ENCODE measurements at regions of chr6 and their contacts with region 1.

Region 1: GRCh38 chr6:7389451-7390225 is at the starts of genes CAGE1 and RIOK1:
- DNase-seq: peak; percentile 95
- H3K4me3 ChIP-seq: peak within 1 kb of the TSS; percentile 55 to 92 (median 77)
- H3K27ac ChIP-seq: peak within 1 kb of the TSS; percentile 66
- H3K4me1 ChIP-seq: peaks cover 13% of the 10 kb centered on the region
- H3K27me3 ChIP-seq: no peaks in the 10 kb centered on the region
- CTCF ChIP-seq: peak in 1 of 2 donors; percentile 14
- POLR2A ChIP-seq: peak; percentile 98
- total RNA-seq, gene CAGE1: not detected in 2 replicates
- total RNA-seq, gene RIOK1: 19.7 and 21.4 TPM in 2 replicates

Region 2: DNA sequence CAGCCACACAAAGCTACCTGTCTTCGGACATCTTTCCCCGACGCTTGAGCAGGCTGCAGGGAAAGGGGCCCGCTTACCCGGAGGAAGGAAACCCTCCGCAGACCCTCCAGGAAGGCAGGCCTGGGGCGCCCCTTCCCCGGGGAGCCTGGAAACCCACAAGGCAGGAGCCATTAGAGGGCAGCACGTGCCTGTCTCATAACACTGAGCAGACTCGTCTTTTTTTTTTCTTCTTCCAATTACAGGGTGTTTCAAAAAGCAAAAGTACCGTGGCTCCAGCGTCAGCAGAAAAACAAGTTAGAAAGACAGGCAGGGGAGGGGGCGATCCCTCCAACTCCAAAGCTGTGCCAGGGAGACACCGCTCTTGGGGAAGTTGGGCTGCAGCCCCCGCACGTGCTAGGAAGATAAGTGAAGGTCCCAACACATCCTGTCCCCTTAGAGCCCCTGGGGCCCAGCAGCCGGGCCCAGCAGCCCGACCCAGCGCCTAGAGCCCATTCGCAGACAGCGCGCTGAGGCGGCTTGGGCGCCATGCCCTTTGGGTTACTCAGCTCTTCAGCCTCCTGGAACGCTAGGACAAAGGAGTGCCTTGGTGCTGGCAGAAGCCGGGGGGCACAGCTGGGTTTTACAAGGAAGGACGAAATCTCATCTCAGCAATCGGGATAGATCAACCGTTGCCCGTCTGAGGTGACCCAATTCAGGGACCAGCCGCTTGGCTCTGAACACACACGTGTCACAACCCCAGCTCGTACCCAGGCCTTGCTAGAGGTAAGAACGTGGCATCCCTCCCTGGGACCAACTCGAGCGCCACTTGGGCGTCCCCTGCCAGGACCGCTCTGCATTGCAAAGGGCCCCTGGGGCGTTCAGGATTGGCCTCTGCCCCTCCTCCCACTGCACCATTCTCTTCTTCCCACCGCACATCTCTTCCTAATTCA is 664.8 kb before region 1 on chr6:
- CTCF ChIA-PET with region 1: no interaction called
- POLR2A ChIA-PET with region 1: no interaction called
- dilution Hi-C with region 1: no loop called
- intact Hi-C with region 1: loop called (anchors 1 kb)
- DNase-seq: peak; percentile 83
- H3K4me3 ChIP-seq: peak overlapping the region in 1 of 3 experiments; percentile 16
- H3K27ac ChIP-seq: peak overlapping the region; percentile 59
- H3K4me1 ChIP-seq: peaks cover 19% of the 10 kb centered on the region
- H3K27me3 ChIP-seq: peaks cover 0 to 2% of the 10 kb centered on the region in 2 experiments
- CTCF ChIP-seq: peak; percentile 57 to 60
- POLR2A ChIP-seq: no peak

Region 3: GRCh38 chr6:7276199-7276524 is 113.5 kb before region 1 on chr6:
- CTCF ChIA-PET with region 1: interaction called, 11 read pairs
- POLR2A ChIA-PET with region 1: no interaction called
- dilution Hi-C with region 1: no loop called
- intact Hi-C with region 1: loop called (anchors 2 kb)
- DNase-seq: no peak
- H3K4me3 ChIP-seq: no peak overlapping the region
- H3K27ac ChIP-seq: no peak overlapping the region
- H3K4me1 ChIP-seq: no peaks in the 10 kb centered on the region
- H3K27me3 ChIP-seq: no peaks in the 10 kb centered on the region
- CTCF ChIP-seq: no peak
- POLR2A ChIP-seq: no peak

Region 4: DNA sequence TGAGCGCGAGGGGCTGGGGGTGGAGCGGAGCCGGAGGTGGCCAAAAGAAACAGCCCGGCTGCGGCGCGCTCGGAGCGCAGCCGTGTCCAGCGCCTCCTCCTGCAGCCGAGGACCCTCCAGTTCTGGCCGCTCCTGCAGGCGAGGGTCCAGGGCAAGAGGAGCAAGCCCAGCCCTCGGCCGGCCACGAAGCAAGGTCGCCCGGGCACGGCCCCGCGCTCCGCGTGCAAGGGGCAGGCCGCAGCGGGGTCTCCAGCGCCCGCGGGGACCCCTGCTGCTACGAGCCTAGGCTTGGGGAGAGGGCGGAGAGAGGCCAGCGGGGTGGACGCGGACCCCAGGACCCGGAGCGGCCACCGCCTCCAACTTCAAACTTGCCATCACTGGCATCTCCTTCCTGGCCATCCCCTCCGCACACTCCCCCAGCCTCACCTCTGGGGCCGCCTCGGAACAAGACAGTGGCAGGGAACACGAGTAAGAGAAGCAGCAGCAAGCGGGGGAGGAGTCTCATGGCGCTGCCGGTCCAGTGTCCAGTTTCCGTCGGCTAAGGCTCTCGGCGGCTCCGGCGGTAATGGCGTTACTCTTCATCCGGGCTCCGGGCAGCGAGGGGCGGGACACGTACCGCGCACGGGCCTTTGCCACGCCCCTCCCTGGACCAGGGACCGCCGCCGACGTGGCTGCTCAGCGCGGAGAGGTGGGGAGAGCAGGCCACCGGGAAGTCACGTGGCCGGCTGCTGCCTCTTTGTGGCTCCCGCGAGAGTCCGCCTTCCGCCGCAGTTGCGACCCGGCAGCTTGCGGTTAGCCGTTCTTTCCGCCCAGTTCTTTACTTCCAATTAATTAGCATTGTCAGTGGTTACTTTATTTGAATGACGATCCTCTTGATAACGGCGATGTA is 76.8 kb before region 1 on chr6 and contains the start of gene SSR1:
- CTCF ChIA-PET with region 1: interaction called, 9 read pairs
- POLR2A ChIA-PET with region 1: no interaction called
- dilution Hi-C with region 1: no loop called
- intact Hi-C with region 1: loop called (anchors 1 kb)
- DNase-seq: peak; percentile 98
- H3K4me3 ChIP-seq: peak within 1 kb of the TSS; percentile 95 to 99 (median 98)
- H3K27ac ChIP-seq: peak within 1 kb of the TSS; percentile 88
- H3K4me1 ChIP-seq: peaks cover 16% of the 10 kb centered on the region
- H3K27me3 ChIP-seq: peaks cover 0 to 2% of the 10 kb centered on the region in 2 experiments
- CTCF ChIP-seq: no peak
- POLR2A ChIP-seq: peak; percentile 89
- total RNA-seq, gene SSR1: 149 and 187 TPM in 2 replicates

Region 5: DNA sequence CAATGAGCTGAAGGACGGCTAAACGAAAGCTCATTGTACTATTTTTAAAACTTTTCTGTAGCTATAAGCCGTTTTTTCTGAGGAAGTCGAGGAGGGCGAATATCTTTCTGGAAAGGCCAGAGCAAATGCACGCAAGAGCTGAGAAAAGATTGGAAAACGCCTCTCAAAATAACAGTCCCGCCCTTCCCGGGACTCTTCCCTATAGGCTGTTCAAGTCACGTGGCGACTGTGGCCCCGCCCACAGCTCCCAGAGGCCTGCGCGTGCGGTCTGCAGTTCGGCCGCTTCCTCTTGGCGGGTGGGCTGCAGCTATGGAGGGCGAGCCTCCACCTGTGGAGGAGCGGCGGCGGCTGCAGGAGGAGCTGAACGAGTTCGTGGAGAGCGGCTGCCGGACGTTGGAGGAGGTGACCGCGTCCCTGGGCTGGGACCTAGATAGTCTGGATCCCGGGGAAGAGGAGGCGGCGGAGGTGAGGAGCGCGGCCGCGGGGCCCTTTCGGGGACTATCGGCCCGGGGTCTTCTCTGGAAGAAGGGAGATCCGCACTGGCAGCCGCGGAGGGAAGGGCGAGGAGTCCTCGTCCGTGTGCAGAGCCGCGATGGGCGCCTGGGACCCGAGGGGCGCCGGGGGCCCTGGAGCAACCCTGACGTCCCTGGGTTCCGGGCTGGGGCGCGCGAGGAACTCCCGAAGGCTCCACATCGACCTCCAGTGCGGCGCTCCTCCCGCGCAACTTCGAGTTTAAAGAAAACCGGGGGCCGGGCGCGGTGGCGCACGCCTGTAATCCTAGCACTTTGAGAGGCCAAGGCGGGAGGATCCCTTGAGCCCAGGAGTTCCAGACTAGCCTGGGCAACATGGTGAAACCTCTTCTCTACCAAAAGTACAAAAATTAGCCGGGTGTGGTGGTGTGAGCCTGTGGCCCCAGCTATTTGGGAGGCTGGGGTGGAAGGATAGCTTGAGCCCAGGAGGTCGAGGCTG is 200.6 kb after region 1 on chr6 and contains the start of gene SNRNP48:
- CTCF ChIA-PET with region 1: no interaction called
- POLR2A ChIA-PET with region 1: interaction called, 6 read pairs
- dilution Hi-C with region 1: no loop called
- intact Hi-C with region 1: loop called (anchors 1 kb)
- DNase-seq: peak; percentile 96
- H3K4me3 ChIP-seq: peak within 1 kb of the TSS; percentile 59 to 89 (median 87)
- H3K27ac ChIP-seq: peak within 1 kb of the TSS; percentile 3
- H3K4me1 ChIP-seq: peaks cover 11% of the 10 kb centered on the region
- H3K27me3 ChIP-seq: peaks cover 0 to 6% of the 10 kb centered on the region in 2 experiments
- CTCF ChIP-seq: no peak
- POLR2A ChIP-seq: peak; percentile 70
- total RNA-seq, gene SNRNP48: 12.8 and 13.2 TPM in 2 replicates